ENCODE measurements at regions of chr5 and their contacts with region 1.

Region 1: DNA sequence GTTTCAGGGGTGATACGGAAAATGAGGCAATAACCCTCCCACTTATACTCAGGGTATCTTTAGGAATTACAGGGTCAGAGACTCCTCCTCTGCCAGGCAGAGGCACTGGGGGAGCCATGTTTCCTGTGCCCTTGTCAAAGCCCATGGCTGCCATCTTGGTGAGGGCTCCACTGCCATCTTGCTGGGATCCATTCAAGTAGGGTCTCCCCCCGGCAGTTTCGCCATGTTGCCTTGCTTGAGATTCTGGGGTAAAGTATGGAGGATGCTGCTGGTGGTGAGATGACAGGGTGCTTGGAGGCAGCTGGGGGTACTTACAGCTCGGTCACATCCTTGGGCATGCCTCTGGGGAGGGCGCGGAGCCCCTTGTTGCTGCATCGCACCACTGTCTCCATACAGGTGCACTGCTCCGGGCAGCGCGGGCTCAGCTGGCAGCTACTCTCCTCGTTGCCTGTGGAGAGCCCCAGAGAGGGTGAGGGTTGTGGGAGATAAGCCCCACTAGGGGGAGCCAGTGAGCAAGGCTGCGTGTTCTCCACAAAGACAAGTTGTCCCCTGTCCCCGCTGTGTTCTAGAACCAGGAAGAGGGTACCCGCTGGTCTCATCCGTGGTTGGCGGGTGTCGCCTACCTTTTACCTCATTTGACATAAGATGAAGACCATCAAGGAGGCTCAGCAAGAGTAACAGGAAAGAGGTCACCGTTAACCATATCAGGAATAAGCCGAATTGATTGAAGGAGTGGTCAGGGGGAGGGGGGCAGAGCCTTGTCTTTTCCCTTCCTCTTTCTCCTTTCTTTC is 169.0 kb upstream of the PANK3 start:
- DNase-seq: peak; percentile 39 to 45
- H3K4me3 ChIP-seq: no peak overlapping the region
- H3K27ac ChIP-seq: no peak overlapping the region
- H3K4me1 ChIP-seq: no peaks in the 10 kb centered on the region
- H3K27me3 ChIP-seq: no peaks in the 10 kb centered on the region
- CTCF ChIP-seq: peak; percentile 15 to 66 (median 44)
- POLR2A ChIP-seq: no peak

Region 2: GRCh38 chr5:168950241-168950951 is 202.2 kb after region 1 on chr5:
- intact Hi-C with region 1: loop called (anchors 10 kb)
- DNase-seq: no peak
- H3K4me3 ChIP-seq: no peak overlapping the region
- H3K27ac ChIP-seq: no peak overlapping the region
- H3K4me1 ChIP-seq: peaks cover 0 to 19% of the 10 kb centered on the region in 2 donors
- H3K27me3 ChIP-seq: no peaks in the 10 kb centered on the region
- CTCF ChIP-seq: no peak
- POLR2A ChIP-seq: no peak